ENCODE measurements at regions of chr10 and their contacts with region 1.

Region 1: GRCh38 chr10:74058658-74059057 is 60.7 kb downstream of the VCL start:
- DNase-seq: peak; percentile 48
- H3K4me3 Mint-ChIP-seq: no peak overlapping the region
- H3K27ac Mint-ChIP-seq: no peak overlapping the region
- H3K4me1 Mint-ChIP-seq: peaks cover 21% of the 10 kb centered on the region
- H3K27me3 Mint-ChIP-seq: no peaks in the 10 kb centered on the region

Region 2: DNA sequence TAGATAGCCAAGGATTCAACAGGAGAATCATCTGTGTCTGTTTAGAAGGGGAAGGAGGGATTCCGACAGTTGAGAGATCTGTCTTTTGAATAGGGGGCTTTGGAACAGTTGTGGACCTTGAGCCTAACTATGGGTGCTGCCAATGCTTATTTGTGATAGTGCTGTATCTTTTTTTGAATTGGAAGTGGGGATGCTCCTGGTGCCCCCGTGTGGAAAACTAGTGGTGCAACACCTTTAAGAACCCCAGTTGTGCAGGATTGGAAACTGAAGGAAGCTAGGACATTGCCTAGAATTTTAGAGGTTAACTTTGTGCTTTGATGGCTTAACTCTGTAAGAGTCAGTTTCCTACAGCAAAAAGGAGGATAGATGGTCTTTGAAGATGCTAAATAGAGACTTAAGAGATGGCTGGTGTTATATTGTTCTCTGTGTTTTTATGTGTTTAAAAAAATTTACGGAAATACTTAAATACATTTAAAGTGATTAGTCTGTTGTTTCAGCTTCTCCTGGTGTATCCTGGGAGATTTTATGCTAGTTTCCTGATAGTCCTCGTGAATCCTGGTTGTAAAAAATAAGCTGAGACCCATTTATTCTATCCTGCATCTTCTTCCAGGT is 22.6 kb after region 1 on chr10:
- CTCF ChIA-PET with region 1: interaction called, 3 read pairs
- intact Hi-C with region 1: loop called (anchors 1 kb)
- DNase-seq: peak; percentile 56
- H3K4me3 Mint-ChIP-seq: no peak overlapping the region
- H3K27ac Mint-ChIP-seq: no peak overlapping the region
- H3K4me1 Mint-ChIP-seq: peaks cover 23% of the 10 kb centered on the region
- H3K27me3 Mint-ChIP-seq: no peaks in the 10 kb centered on the region

Measured in activated naive CD4-positive, alpha-beta T cell treated with anti-CD3 and anti-CD28 coated beads for 36 hours (primary cell).